AG04449 (cell line): ENCODE measurements at regions of chr12 and their contacts with region 1.

Region 1: DNA sequence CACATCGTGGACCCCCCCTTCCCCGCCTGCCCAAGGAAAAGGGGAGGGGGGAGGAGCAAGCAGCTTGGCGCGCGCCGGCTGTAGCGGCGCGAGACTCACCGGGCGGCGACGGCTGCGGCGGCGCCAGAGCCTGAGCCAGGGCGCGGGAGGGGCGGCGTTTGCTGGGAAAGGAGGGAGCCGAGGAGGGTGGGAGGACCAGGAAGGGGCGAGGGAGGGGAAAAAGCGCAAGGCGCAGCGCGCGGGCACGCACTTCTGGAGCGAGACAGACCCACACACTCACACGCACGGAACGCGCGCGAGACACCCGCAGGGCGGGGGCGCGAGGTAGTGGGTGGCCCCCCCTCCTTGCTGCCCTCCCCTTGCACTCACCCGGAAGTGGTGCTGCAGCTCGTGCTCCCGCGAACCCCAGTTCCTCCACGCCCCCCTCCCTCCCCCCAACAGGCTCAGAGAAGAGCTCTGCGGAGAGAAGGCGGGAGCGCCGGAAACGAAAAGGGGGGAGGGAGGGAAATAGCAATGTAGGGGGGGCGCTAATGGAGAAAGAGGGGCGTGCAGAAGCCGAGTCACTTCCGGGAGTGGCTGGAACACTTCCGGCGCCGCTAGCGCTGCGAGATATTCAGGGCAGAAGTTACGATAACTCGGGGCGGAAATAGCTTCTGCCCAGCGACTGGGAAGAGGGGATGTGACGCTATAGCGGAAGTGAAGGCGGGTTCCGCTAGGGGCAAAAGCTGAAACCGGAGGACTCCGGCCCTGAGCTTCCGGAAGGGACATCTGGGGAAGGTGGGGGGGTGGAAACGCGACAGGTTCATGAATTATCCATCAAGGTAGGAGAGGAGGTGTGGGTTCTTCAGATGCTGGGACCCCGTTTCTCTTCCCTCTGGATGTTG is at the start of gene ZNF384:
- DNase-seq: peak; percentile 93
- H3K4me3 ChIP-seq: peak within 1 kb of the TSS; percentile 93
- CTCF ChIP-seq: no peak

Region 2: DNA sequence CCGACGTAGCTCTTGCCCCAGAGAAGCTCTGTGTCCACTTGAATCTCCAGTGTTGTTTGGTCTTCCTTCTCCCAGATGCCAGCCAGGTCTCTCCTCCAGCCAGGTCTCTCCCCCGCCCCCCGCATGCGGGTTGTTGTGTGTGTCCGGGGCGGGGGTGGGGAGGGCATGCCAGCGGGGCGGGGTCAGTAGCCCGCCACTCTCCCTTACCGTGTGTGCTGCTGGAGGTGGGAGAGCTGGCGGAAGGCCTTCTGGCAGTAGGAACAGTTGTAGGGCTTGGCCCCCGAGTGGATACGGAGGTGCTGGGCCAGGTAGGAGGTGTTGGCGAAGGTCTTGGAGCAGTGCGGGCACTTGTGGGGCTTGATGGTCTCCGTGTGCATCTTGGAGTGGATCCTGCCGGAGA is 17.1 kb before region 1 on chr12:
- CTCF ChIA-PET with region 1: interaction called, 33 read pairs
- POLR2A ChIA-PET with region 1: interaction called, 3 read pairs
- DNase-seq: no peak
- H3K4me3 ChIP-seq: no peak overlapping the region
- CTCF ChIP-seq: no peak

Region 3: DNA sequence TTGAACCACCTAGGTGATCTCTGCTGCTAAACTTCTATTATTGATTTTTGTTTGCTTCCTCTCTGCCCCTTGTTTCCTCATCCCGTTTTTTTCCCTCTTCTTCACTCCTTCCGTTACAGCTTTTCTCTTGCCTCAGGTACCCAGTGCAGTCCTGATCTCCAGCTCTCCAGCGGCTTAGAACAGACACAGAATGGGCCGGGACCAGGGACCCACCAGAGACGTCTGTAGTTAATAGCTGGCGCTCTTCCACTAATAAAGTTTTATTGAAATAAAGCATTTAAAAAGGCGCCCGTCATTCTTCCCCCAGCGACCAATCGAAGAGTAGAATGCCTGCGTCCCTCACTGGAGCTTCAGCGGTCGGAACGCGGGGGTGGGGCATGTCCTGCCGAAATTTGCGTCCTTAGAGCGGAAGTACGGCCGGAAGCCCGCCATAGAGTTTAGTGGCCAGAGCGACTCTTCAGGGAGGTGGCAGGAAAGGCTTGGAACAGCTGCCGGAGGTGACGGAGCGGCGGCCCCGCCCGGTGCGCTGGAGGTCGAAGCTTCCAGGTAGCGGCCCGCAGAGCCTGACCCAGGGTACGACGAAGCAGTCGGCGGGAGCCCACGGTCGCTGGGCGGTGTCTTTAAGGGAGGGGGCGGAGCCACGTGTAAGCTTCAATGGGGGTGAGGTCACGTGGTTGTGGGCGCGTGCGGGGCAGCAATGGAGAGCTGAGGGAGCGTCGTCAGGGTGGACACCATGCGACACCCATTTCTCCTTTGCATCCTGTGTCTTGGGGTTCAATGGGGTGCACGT is 34.6 kb after region 1 on chr12 and contains the start of gene COPS7A:
- CTCF ChIA-PET with region 1: no interaction called
- POLR2A ChIA-PET with region 1: interaction called, 19 read pairs
- DNase-seq: peak; percentile 84
- H3K4me3 ChIP-seq: peak within 1 kb of the TSS; percentile 56
- CTCF ChIP-seq: no peak

Region 4: DNA sequence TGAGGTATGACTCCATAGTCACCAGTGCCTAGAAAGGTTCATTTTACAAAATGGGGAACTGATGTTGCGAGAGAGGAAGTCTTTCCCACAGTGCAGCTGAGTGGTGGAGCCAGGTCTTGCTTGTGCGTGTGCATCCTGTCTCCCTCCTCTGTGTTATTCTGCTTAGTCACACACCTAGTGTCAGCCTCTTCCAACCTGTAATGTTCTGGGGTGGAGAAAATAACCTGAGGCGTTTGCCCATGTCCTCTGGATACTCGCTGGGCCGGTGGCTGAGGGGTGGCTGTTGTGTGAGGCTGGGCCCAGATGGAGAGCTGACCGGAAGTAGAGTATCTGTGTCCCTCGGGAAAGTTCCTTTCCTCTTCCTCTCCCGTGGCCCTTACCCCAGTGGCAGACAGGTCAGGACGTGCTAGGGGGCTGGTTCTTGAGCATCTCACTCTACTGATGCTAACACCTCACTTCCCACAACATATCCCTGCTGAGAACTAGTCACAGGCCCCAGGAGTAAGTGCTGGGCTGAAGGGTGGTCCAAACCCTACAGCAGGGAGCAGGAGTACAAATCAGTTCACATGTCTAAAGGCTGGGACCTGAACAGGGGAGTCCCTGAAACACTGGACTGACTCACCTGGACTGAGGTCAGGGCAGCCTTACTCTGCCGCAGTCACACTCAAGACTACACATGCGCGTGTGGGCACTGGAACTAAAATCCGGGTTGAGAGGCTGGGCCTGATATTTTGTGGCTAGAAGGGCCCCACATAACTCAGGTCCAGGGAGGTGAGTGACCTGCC is 56.7 kb after region 1 on chr12:
- CTCF ChIA-PET with region 1: no interaction called
- POLR2A ChIA-PET with region 1: no interaction called
- DNase-seq: no peak
- H3K4me3 ChIP-seq: no peak overlapping the region
- CTCF ChIP-seq: no peak